Posterior vena cava (tissue), 2 donors: ENCODE measurements at regions of chr5 and their contacts with region 1.

Region 1: GRCh38 chr5:179235416-179236400 is 109.6 kb downstream of the ADAMTS2 start:
- DNase-seq: peak; percentile 62

Region 2: DNA sequence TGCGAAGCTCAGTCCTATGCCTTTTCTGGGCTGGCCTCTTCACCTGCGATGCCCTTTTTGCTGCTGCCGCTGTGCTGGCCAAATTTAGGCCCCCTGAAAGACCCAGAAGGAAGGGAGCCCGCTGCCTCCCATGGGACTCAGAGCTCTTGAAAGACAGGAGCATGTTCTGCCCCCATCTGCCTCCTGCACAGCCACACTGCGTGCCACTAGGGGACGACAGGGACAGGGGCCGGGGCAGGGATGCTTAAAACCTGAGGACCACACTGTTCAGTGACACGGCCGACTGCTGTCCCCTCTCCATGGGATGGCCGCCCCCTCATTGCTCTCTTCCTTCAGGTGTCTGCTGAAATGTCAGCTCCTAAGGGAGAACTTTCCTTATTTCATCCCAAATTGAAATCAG is 22.8 kb before region 1 on chr5:
- intact Hi-C with region 1: loop called in 1 of 2 experiments (anchors 1 kb)
- DNase-seq: no peak